Dorsolateral prefrontal cortex (tissue), 120 donors: ENCODE measurements at regions of chr16 and their contacts with region 1.

Region 1: GRCh38 chr16:15874745-15875314 is 13.6 kb downstream of the CEP20 start:
- DNase-seq: peak in 8 of 10 donors; percentile 14 to 76 (median 54)
- H3K4me3 ChIP-seq: peak overlapping the region in 4 of 59 donors; percentile 2 to 33 (median 10)
- H3K27ac ChIP-seq: peak overlapping the region in 12 of 59 donors; percentile 1 to 61 (median 25)
- H3K27me3 ChIP-seq: no peaks in the 10 kb centered on the region
- CTCF ChIP-seq: peak in 55 of 56 donors; percentile 43 to 77 (median 65)

Region 2: DNA sequence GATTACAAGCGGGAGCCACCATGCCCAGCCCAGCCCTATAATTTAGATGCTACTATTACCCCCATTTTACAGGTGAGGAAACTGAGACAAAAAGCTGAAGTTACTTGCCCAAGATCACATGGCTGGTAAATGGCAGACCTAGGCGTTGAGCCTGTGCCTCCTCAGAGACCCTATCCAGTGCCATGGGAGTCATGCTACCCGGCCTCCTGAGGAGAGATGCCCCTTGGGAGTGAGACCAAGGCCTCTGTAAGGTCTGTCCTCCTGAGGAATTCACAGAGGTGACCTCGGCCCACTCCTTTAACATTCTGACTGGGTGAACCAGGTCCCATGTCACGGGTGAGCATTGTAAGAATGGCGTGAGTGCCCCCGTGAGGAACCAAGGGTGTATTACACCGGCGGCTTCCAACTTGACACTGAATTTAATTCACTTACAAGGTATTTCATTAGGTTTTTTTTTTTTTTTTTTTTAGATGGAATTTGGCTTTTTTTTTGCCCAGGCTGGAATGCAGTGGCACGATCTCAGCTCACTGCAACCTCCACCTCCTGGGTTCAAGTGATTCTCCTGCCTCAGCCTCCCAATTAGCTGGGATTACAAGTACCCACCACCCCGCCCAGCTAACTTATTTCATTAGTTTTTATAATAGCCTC is 252.8 kb after region 1 on chr16:
- intact Hi-C with region 1: loop called (anchors 5 to 10 kb)
- DNase-seq: peak; percentile 51 to 77 (median 63)
- H3K4me3 ChIP-seq: no peak overlapping the region
- H3K27ac ChIP-seq: no peak overlapping the region
- H3K27me3 ChIP-seq: no peaks in the 10 kb centered on the region
- CTCF ChIP-seq: peak; percentile 57 to 87 (median 80)